Ascending aorta (tissue), 2 donors: ENCODE measurements at regions of chr20 and their contacts with region 1.

Region 1: DNA sequence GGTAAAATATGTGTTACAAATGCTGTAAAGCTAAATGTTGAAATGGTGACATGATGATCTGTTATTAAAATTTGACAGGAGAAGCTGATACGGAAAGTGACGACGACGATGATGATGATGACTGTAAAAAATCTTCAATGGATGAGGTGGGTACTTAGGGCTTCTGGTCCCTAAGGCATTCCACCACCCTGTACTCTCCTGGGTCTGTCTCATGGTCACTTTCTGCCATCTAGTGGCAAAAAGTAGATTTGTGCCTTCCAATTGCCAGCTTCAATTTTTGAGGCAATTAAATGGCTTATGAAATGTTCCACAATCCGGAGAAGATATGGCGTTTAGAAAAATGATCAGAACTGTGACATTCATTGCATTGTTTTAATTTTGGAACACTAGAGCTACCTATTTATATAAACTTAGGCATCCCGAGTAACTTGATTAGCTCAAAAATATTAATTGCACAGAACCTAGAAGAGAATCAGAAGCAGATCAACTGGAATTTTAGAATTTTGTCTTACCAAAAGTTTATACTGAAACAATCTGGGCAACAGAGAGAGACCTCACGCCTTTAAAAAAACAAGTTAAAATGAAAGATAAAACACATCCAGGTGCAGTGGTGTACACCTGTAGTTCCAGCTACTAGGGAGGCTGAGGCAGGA is 346.5 kb upstream of the PLCB4 start:
- DNase-seq: no peak
- H3K4me3 ChIP-seq: no peak overlapping the region
- H3K27ac ChIP-seq: no peak overlapping the region
- H3K4me1 ChIP-seq: no peaks in the 10 kb centered on the region
- H3K27me3 ChIP-seq: no peaks in the 10 kb centered on the region
- CTCF ChIP-seq: peak; percentile 53 to 73 (median 58)

Region 2: DNA sequence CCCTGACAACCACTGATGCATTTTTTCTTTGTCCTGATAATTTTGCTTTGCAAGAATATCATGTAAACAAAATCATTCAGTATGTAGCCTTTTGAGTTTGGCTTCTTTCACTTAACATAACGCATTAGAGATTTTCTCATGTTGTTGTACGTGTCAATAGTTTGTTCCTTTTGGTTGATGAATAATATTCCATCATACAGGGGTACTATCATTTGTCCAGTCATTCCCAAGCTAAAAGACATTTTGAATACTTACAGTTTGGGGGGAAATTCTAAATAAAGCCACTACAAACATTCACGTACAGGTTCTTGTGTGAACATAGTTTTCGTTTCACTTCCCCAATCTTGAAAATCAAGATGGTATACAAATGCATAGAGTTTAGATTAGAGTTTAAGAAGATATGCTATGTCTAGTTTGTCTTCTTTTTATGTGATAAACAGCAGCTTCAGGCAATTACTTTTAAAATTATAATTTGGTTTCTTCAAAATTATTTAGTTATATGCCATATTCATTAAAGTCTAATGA is 787.3 kb before region 1 on chr20:
- intact Hi-C with region 1: loop called (anchors 5 kb)
- DNase-seq: no peak
- H3K4me3 ChIP-seq: no peak overlapping the region
- H3K27ac ChIP-seq: no peak overlapping the region
- H3K4me1 ChIP-seq: no peaks in the 10 kb centered on the region
- H3K27me3 ChIP-seq: no peaks in the 10 kb centered on the region
- CTCF ChIP-seq: no peak

Region 3: DNA sequence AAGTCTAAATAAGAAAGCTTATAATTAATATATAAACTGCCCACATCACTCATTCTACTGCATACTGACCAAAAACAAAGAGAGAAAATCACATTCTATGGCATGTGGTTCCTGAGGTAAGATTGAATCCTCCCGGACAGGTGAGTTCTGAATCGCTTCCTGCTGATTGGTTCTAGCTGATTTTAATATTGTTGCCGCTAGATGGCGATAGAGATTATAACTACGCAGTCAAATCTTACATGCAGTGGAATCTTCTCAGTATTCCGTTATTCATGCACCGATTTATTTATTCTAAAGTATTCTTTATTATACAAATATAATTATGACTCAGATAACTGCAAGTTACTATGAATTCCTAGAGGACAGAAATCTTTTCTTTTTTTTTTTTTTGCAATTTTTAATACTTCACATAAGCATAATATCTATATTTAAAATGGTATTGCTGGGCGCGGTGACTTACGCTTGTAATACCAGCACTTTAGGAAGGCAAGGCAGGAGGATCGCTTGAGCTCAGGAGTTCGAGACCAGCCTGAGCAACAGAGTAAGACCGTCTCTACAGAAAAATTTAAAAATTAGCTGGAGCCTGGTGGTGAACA is 678.6 kb before region 1 on chr20:
- intact Hi-C with region 1: loop called (anchors 1 kb)
- DNase-seq: no peak
- H3K4me3 ChIP-seq: no peak overlapping the region
- H3K27ac ChIP-seq: no peak overlapping the region
- H3K4me1 ChIP-seq: no peaks in the 10 kb centered on the region
- H3K27me3 ChIP-seq: no peaks in the 10 kb centered on the region
- CTCF ChIP-seq: peak; percentile 53 to 74 (median 69)

Region 4: GRCh38 chr20:8131598-8132483 is 590.6 kb before region 1 on chr20 and contains the start of gene PLCB1:
- intact Hi-C with region 1: loop called (anchors 2 kb)
- DNase-seq: peak in 1 of 2 donors; percentile 87
- H3K4me3 ChIP-seq: peak within 1 kb of the TSS; percentile 73 to 82
- H3K27ac ChIP-seq: peak within 1 kb of the TSS; percentile 37 to 47
- H3K4me1 ChIP-seq: no peaks in the 10 kb centered on the region
- H3K27me3 ChIP-seq: no peaks in the 10 kb centered on the region
- CTCF ChIP-seq: peak; percentile 71 to 84 (median 76)
- total RNA-seq, gene PLCB1: 22.9 TPM

Region 5: GRCh38 chr20:8291873-8292272 is 430.5 kb before region 1 on chr20:
- intact Hi-C with region 1: no loop called
- DNase-seq: no peak
- H3K4me3 ChIP-seq: no peak overlapping the region
- H3K27ac ChIP-seq: no peak overlapping the region
- H3K4me1 ChIP-seq: no peaks in the 10 kb centered on the region
- H3K27me3 ChIP-seq: no peaks in the 10 kb centered on the region
- CTCF ChIP-seq: no peak

Region 6: DNA sequence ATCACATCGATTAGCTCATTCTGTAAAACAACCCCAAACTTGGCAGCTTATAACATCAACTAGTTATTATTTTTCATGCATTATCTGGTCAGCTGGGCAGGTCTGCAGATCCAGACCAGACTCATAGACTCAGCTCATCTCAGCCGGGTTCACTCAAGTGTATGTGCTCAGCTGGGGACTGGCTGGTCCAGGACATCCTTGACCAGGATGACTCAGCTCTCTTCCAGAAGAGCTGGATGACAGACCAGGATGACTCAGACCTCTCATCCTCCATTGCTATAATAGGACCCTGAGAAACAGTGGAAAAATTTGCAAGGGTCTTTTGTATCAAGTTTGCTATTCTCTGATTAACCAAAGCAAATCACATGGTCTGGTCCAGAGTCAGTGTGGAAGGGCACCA is 34.0 kb after region 1 on chr20:
- intact Hi-C with region 1: no loop called
- DNase-seq: no peak
- H3K4me3 ChIP-seq: no peak overlapping the region
- H3K27ac ChIP-seq: no peak overlapping the region
- H3K4me1 ChIP-seq: no peaks in the 10 kb centered on the region
- H3K27me3 ChIP-seq: no peaks in the 10 kb centered on the region
- CTCF ChIP-seq: no peak

Region 7: DNA sequence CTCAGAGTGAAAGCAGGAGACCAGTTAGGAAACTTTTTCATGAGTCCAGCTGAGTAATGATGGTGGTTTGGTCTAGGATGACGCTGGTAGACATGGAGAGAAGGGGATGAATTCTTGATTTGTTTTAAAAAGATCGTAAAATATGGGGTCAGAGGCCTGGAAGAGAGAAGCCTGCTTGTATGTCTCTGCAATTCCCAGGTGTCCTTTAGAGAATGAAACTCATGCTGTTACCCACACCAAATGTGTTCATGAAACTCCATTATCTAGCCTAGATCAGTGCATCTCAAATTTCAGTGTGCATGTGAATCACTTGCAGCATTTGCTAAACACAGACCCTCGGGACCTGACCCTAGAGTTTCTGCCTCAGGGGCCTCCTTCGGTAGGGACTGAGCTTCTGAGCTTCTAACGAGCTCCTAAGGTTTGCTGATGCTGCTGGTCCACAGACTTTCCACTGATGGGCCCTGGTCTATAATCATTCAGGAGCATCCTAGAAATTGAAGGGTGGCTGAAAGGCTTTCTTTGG is 44.5 kb after region 1 on chr20:
- intact Hi-C with region 1: no loop called
- DNase-seq: no peak
- H3K4me3 ChIP-seq: no peak overlapping the region
- H3K27ac ChIP-seq: no peak overlapping the region
- H3K4me1 ChIP-seq: no peaks in the 10 kb centered on the region
- H3K27me3 ChIP-seq: no peaks in the 10 kb centered on the region
- CTCF ChIP-seq: no peak